ENCODE measurements at regions of chr5 and their contacts with region 1.

Region 1: GRCh38 chr5:79514391-79515105 is 614 bp upstream of the HOMER1 start:
- DNase-seq: peak; percentile 76 to 95
- H3K4me3 ChIP-seq: peak overlapping the region; percentile 85 to 91
- H3K27ac ChIP-seq: peak overlapping the region; percentile 97 to 98
- H3K4me1 ChIP-seq: peaks cover 0 to 2% of the 10 kb centered on the region in 2 donors
- H3K27me3 ChIP-seq: no peaks in the 10 kb centered on the region
- CTCF ChIP-seq: no peak

Region 2: GRCh38 chr5:78016863-78017529 is 1497.6 kb before region 1 on chr5:
- intact Hi-C with region 1: no loop called
- DNase-seq: no peak
- H3K4me3 ChIP-seq: no peak overlapping the region
- H3K27ac ChIP-seq: no peak overlapping the region
- H3K4me1 ChIP-seq: no peaks in the 10 kb centered on the region
- H3K27me3 ChIP-seq: no peaks in the 10 kb centered on the region
- CTCF ChIP-seq: no peak

Region 3: DNA sequence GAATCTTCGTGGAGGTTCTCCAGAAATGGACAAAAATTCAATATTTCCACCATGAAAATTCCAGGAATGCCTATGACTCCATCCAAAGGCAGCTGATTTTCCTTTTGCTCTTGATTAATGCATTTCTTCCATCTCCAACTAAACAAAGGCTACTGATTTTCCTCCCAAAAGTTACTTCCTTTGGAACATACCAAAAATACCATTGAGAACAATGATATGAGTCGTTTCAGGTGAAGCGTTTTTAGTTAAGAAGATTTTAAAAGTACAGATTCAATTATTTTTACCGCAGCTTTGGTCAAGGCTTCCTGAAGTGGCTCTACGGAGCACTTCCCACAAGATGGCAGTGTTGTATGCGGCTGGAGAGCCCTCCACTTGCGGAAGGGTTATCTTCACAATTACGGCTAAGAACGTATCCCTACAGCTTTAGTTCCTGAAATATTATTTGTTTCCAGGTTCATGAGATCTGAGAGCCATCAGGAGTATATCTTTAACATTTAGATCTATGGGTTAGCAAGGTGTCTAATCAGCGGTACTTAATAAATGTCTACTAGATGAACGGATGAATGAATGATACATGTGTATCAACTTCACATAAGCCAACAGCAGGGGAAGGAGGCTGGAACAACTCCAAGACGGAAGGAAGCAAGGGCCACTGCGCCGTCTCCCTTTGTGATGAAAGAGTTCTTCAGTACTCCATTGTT is 493.5 kb before region 1 on chr5:
- intact Hi-C with region 1: loop called (anchors 5 kb)
- DNase-seq: peak in 1 of 2 donors; percentile 75
- H3K4me3 ChIP-seq: peak overlapping the region in 1 of 2 donors; percentile 22
- H3K27ac ChIP-seq: peak overlapping the region in 1 of 2 donors; percentile 14
- H3K4me1 ChIP-seq: peaks cover 0 to 11% of the 10 kb centered on the region in 2 donors
- H3K27me3 ChIP-seq: no peaks in the 10 kb centered on the region
- CTCF ChIP-seq: peak; percentile 37 to 77 (median 77)

Region 4: GRCh38 chr5:79235634-79236363 is 278.7 kb before region 1 on chr5 and contains the start of gene JMY:
- intact Hi-C with region 1: loop called (anchors 5 kb)
- DNase-seq: peak; percentile 74 to 90
- H3K4me3 ChIP-seq: peak within 1 kb of the TSS; percentile 70 to 91
- H3K27ac ChIP-seq: peak within 1 kb of the TSS; percentile 72 to 94
- H3K4me1 ChIP-seq: peaks cover 5 to 10% of the 10 kb centered on the region in 2 donors
- H3K27me3 ChIP-seq: no peaks in the 10 kb centered on the region
- CTCF ChIP-seq: peak in 2 of 3 experiments; percentile 8 to 17
- total RNA-seq, gene JMY: 5.2 TPM

Region 5: DNA sequence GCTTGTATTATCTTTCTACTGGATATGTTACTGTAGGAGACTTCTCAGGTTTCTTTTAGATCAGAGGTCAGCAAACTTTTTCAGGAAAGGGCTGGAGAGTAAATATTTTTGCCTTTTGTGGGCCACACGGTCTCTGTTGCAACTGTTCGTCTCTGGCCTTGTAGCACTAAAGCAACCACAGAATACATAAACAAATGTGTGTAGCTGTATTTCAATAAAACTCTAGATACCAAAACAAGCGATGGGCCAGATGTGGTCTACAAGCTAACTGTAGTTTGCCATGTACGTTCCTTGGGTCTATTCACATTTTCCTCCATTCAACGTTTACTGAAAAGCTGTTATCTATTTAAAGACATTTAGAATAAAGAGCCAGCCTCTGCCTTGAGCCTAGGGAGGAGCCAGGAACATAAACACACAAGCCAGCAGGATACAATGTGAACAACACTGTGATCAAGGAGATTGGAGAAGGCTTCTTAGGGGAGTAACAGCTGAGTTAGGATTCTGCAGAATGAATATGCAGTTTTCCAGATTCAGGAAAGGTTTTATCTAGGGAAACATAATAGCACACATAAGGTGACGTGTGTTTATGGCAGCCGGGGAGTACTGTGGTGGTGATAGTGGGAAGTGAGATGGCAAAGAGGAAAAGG is 32.4 kb after region 1 on chr5:
- intact Hi-C with region 1: no loop called
- DNase-seq: no peak
- H3K4me3 ChIP-seq: no peak overlapping the region
- H3K27ac ChIP-seq: no peak overlapping the region
- H3K4me1 ChIP-seq: no peaks in the 10 kb centered on the region
- H3K27me3 ChIP-seq: no peaks in the 10 kb centered on the region
- CTCF ChIP-seq: no peak

Region 6: GRCh38 chr5:80255732-80256479 is 741.4 kb after region 1 on chr5 and contains the start of gene SERINC5:
- intact Hi-C with region 1: loop called (anchors 10 kb)
- DNase-seq: peak; percentile 41 to 92
- H3K4me3 ChIP-seq: peak within 1 kb of the TSS; percentile 77 to 84
- H3K27ac ChIP-seq: peak within 1 kb of the TSS; percentile 93 to 96
- H3K4me1 ChIP-seq: peaks cover 0 to 5% of the 10 kb centered on the region in 2 donors
- H3K27me3 ChIP-seq: no peaks in the 10 kb centered on the region
- CTCF ChIP-seq: no peak
- total RNA-seq, gene SERINC5: 3.4 TPM

Region 7: GRCh38 chr5:80654391-80655230 is 1140.1 kb after region 1 on chr5 and contains the starts of genes DHFR and MSH3:
- intact Hi-C with region 1: loop called (anchors 10 kb)
- DNase-seq: peak; percentile 20 to 89
- H3K4me3 ChIP-seq: peak within 1 kb of the TSS; percentile 68 to 100
- H3K27ac ChIP-seq: peak within 1 kb of the TSS; percentile 87 to 98
- H3K4me1 ChIP-seq: peaks cover 9 to 15% of the 10 kb centered on the region in 2 donors
- H3K27me3 ChIP-seq: no peaks in the 10 kb centered on the region
- CTCF ChIP-seq: peak in 1 of 3 experiments; percentile 18
- total RNA-seq, gene DHFR: 0.53 TPM
- total RNA-seq, gene MSH3: 8.7 TPM

Measured in ascending aorta (tissue), 2 donors.